ENCODE measurements at regions of chr14 and their contacts with region 1.

Region 1: DNA sequence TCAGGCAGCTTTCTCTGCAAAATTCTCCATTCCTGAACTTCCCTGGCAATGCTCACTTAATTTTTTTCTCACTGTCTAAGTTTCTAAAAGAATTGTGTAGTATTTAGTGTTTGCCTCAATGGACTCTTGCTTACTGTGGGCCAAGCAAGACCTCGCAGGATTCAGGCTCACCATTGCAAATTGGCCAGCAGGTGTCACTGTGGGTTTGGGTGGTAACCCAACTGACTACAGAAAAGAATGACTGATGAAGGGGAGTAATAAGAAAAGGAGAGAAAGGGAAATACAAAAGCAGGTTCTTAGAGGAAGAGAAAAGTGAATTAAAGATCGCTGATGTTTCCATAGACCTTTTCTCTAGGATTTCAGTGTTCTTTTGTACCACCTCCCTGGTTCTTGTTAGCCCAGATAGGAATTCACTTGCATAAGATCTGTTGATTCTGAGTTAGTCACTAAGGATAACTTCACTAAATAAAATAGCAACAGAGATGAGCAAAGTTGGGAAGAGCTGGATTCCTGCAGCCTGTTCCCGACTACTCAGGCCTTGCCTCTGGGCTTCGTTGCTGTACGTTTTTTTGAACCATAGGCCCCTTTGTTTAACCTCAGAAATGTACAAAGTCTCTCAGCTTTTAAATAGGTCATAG is 386.5 kb upstream of the DDHD1 start:
- DNase-seq: peak; percentile 69
- ATAC-seq: peak; percentile 79
- H3K4me3 ChIP-seq: no peak overlapping the region
- H3K4me3 Mint-ChIP-seq: no peak overlapping the region
- H3K27ac ChIP-seq: no peak overlapping the region
- H3K27ac Mint-ChIP-seq: no peak overlapping the region
- H3K4me1 ChIP-seq: no peaks in the 10 kb centered on the region
- H3K4me1 Mint-ChIP-seq: peaks cover 2% of the 10 kb centered on the region
- H3K27me3 ChIP-seq: no peaks in the 10 kb centered on the region
- H3K27me3 Mint-ChIP-seq: peaks cover 4% of the 10 kb centered on the region
- CTCF ChIP-seq: peak; percentile 88

Region 2: GRCh38 chr14:53126731-53127130 is 412.9 kb before region 1 on chr14:
- CTCF ChIA-PET with region 1: no interaction called
- POLR2A ChIA-PET with region 1: no interaction called
- intact Hi-C with region 1: no loop called
- DNase-seq: peak; percentile 54
- ATAC-seq: peak; percentile 17
- H3K4me3 ChIP-seq: peak overlapping the region in 4 of 5 experiments; percentile 4 to 35 (median 34)
- H3K4me3 Mint-ChIP-seq: peak overlapping the region; percentile 81
- H3K27ac ChIP-seq: peak overlapping the region; percentile 83 to 91
- H3K27ac Mint-ChIP-seq: peak overlapping the region; percentile 80
- H3K4me1 ChIP-seq: peaks cover 18 to 23% of the 10 kb centered on the region in 2 donors
- H3K4me1 Mint-ChIP-seq: peaks cover 17% of the 10 kb centered on the region
- H3K27me3 ChIP-seq: no peaks in the 10 kb centered on the region
- H3K27me3 Mint-ChIP-seq: no peaks in the 10 kb centered on the region
- CTCF ChIP-seq: no peak

Region 3: GRCh38 chr14:53613404-53614253 is 74.0 kb after region 1 on chr14:
- CTCF ChIA-PET with region 1: interaction called, 17 read pairs
- POLR2A ChIA-PET with region 1: no interaction called
- intact Hi-C with region 1: loop called (anchors 5 kb)
- DNase-seq: peak; percentile 82
- ATAC-seq: peak; percentile 90
- H3K4me3 ChIP-seq: peak overlapping the region in 1 of 5 experiments; percentile 18
- H3K4me3 Mint-ChIP-seq: peak overlapping the region; percentile 81
- H3K27ac ChIP-seq: peak overlapping the region; percentile 37 to 65
- H3K27ac Mint-ChIP-seq: peak overlapping the region; percentile 99
- H3K4me1 ChIP-seq: peaks cover 14 to 18% of the 10 kb centered on the region in 2 donors
- H3K4me1 Mint-ChIP-seq: peaks cover 38% of the 10 kb centered on the region
- H3K27me3 ChIP-seq: no peaks in the 10 kb centered on the region
- H3K27me3 Mint-ChIP-seq: no peaks in the 10 kb centered on the region
- CTCF ChIP-seq: no peak

Region 4: DNA sequence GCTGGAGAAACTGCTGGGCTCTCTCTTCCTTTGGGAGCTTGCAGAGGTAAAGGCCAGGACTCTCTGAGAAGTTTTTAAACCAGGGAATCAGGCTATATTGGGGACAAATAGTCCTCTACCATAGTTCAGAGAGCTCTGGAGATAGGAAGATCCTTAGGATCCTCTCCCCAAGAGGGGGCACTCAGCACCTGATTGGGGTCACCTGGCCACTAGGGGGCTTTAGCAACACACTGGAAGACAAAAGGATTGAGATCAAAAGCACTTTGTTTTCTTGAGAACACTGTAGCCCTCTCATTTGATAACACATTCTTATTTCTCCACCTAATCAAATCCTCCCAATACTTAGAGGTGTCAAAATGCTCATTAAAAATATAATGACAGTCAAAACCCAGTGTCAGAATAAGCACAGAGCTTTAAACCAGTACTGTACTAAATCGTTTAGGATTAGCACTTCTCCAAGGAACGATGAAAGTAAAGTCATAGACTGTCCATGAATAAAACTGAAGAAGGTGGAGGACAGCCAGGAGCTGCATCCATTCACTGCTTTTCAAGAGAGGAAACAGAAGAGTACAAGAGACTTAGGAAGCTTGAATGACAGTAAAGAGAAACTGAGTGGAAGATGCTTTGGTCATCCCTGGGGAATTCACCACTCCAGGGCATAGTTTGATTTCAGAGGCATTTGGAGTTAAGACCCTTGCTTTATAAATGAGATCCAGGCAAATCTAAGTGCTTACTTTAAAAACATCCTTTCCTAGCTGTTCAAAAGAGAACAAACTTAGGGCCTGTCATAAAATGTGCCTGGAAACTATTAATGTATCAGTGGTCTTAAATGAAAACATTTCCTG is 390.5 kb after region 1 on chr14:
- CTCF ChIA-PET with region 1: no interaction called
- POLR2A ChIA-PET with region 1: no interaction called
- intact Hi-C with region 1: loop called (anchors 10 kb)
- DNase-seq: peak; percentile 9
- ATAC-seq: no peak
- H3K4me3 ChIP-seq: no peak overlapping the region
- H3K4me3 Mint-ChIP-seq: no peak overlapping the region
- H3K27ac ChIP-seq: no peak overlapping the region
- H3K27ac Mint-ChIP-seq: no peak overlapping the region
- H3K4me1 ChIP-seq: no peaks in the 10 kb centered on the region
- H3K4me1 Mint-ChIP-seq: no peaks in the 10 kb centered on the region
- H3K27me3 ChIP-seq: no peaks in the 10 kb centered on the region
- H3K27me3 Mint-ChIP-seq: peaks cover 15% of the 10 kb centered on the region
- CTCF ChIP-seq: peak; percentile 45

Region 5: DNA sequence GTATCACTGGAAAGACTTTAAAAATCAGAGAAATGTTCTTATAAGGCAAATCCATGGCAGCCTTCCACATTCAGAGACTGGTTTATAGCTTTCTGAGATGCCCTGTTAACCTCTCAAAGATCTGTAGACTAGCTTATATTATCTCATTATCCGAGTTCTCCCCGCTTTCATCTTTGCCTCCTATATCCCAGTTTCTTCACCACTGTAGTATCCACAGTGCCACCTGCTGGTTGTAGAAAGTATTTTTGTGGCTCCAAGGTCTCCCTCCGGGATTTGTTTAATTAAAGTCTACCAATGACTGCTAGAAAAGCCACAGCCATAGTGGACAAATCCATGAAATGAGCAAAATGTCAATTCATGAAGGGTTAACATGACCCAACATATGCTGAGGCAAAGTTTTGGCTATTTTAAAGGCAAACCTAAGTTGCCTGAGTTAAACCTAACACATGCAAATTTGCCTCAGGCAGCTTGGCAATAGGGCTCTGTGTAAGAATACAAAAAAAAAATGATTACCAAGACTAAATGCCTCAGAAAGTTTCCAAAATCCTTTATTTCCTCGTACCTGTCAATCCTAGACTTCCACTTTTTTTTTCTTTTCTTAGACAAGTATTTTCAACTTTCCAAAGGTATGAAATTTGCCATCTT is 635.8 kb after region 1 on chr14:
- CTCF ChIA-PET with region 1: interaction called, 98 read pairs
- POLR2A ChIA-PET with region 1: no interaction called
- intact Hi-C with region 1: loop called (anchors 1 kb)
- DNase-seq: peak; percentile 63
- ATAC-seq: no peak
- H3K4me3 ChIP-seq: no peak overlapping the region
- H3K4me3 Mint-ChIP-seq: no peak overlapping the region
- H3K27ac ChIP-seq: no peak overlapping the region
- H3K27ac Mint-ChIP-seq: no peak overlapping the region
- H3K4me1 ChIP-seq: no peaks in the 10 kb centered on the region
- H3K4me1 Mint-ChIP-seq: no peaks in the 10 kb centered on the region
- H3K27me3 ChIP-seq: peaks cover 0 to 5% (median 2%) of the 10 kb centered on the region in 4 experiments
- H3K27me3 Mint-ChIP-seq: peaks cover 19% of the 10 kb centered on the region
- CTCF ChIP-seq: peak; percentile 93

Region 6: GRCh38 chr14:54347997-54348611 is 808.5 kb after region 1 on chr14:
- CTCF ChIA-PET with region 1: interaction called, 10 read pairs
- POLR2A ChIA-PET with region 1: no interaction called
- intact Hi-C with region 1: no loop called
- DNase-seq: peak; percentile 52
- ATAC-seq: peak; percentile 43
- H3K4me3 ChIP-seq: no peak overlapping the region
- H3K4me3 Mint-ChIP-seq: no peak overlapping the region
- H3K27ac ChIP-seq: no peak overlapping the region
- H3K27ac Mint-ChIP-seq: no peak overlapping the region
- H3K4me1 ChIP-seq: no peaks in the 10 kb centered on the region
- H3K4me1 Mint-ChIP-seq: peaks cover 3% of the 10 kb centered on the region
- H3K27me3 ChIP-seq: peaks cover 0 to 9% (median 0%) of the 10 kb centered on the region in 4 experiments
- H3K27me3 Mint-ChIP-seq: peaks cover 7% of the 10 kb centered on the region
- CTCF ChIP-seq: peak; percentile 75

Measured in B cell (primary cell).